Psoas muscle (tissue), 8 donors: ENCODE measurements at regions of chrX and their contacts with region 1.

Region 1: GRCh38 chrX:45063319-45064095 is 137.2 kb downstream of the DIPK2B start:
- DNase-seq: peak in 1 of 2 donors; percentile 58
- ATAC-seq: peak; percentile 51 to 83 (median 74)
- H3K4me3 ChIP-seq: no peak overlapping the region
- H3K27ac ChIP-seq: no peak overlapping the region
- H3K4me1 ChIP-seq: no peaks in the 10 kb centered on the region
- H3K27me3 ChIP-seq: no peaks in the 10 kb centered on the region
- CTCF ChIP-seq: no peak

Region 2: GRCh38 chrX:45007598-45007997 is 55.9 kb before region 1 on chrX:
- intact Hi-C with region 1: loop called in 1 of 2 experiments (anchors 5 kb)
- DNase-seq: no peak
- ATAC-seq: peak in 1 of 4 donors; percentile 29
- H3K4me3 ChIP-seq: no peak overlapping the region
- H3K27ac ChIP-seq: no peak overlapping the region
- H3K4me1 ChIP-seq: peaks cover 23% of the 10 kb centered on the region
- H3K27me3 ChIP-seq: no peaks in the 10 kb centered on the region
- CTCF ChIP-seq: no peak